Mammary epithelial cell (primary cell): ENCODE measurements at regions of chr16 and their contacts with region 1.

Region 1: GRCh38 chr16:70653809-70654771 is 7.7 kb downstream of the IL34 start:
- DNase-seq: peak; percentile 79
- H3K4me3 ChIP-seq: no peak overlapping the region
- H3K27ac ChIP-seq: no peak overlapping the region
- H3K4me1 ChIP-seq: peaks cover 10% of the 10 kb centered on the region
- H3K27me3 ChIP-seq: no peaks in the 10 kb centered on the region
- CTCF ChIP-seq: peak; percentile 79 to 84

Region 2: GRCh38 chr16:69406780-69407331 is 1247.2 kb before region 1 on chr16:
- CTCF ChIA-PET with region 1: interaction called, 13 read pairs
- dilution Hi-C with region 1: no loop called
- in situ Hi-C with region 1: no loop called
- intact Hi-C with region 1: no loop called
- DNase-seq: no peak
- H3K4me3 ChIP-seq: no peak overlapping the region
- H3K27ac ChIP-seq: no peak overlapping the region
- H3K4me1 ChIP-seq: peaks cover 61% of the 10 kb centered on the region
- H3K27me3 ChIP-seq: no peaks in the 10 kb centered on the region
- CTCF ChIP-seq: no peak

Region 3: GRCh38 chr16:70320121-70320520 is 334.0 kb before region 1 on chr16:
- CTCF ChIA-PET with region 1: no interaction called
- dilution Hi-C with region 1: no loop called
- in situ Hi-C with region 1: no loop called
- intact Hi-C with region 1: no loop called
- DNase-seq: no peak
- H3K4me3 ChIP-seq: no peak overlapping the region
- H3K27ac ChIP-seq: no peak overlapping the region
- H3K4me1 ChIP-seq: no peaks in the 10 kb centered on the region
- H3K27me3 ChIP-seq: no peaks in the 10 kb centered on the region
- CTCF ChIP-seq: no peak

Region 4: DNA sequence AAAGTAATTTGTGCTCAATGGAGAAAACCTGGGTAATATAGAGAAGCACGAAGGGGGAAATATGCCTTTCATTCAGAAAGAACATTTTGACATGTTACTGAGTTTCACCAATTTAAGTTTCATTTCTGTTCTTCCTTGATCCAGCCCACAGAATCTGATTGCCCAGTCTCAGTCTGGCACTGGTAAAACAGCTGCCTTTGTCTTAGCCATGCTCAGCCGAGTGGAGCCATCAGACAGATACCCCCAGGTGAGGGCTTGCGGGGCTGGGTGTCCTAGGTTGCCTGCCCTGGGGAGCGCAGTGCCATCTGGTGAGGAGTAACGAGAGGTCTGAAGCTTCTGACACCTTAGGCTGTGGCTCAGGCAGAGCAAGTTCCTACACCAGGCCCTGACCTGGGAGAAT is 289.7 kb before region 1 on chr16:
- CTCF ChIA-PET with region 1: interaction called, 4 read pairs
- dilution Hi-C with region 1: no loop called
- in situ Hi-C with region 1: loop called in 1 of 2 experiments (anchors 10 kb)
- intact Hi-C with region 1: no loop called
- DNase-seq: no peak
- H3K4me3 ChIP-seq: no peak overlapping the region
- H3K27ac ChIP-seq: no peak overlapping the region
- H3K4me1 ChIP-seq: no peaks in the 10 kb centered on the region
- H3K27me3 ChIP-seq: no peaks in the 10 kb centered on the region
- CTCF ChIP-seq: no peak

Region 5: DNA sequence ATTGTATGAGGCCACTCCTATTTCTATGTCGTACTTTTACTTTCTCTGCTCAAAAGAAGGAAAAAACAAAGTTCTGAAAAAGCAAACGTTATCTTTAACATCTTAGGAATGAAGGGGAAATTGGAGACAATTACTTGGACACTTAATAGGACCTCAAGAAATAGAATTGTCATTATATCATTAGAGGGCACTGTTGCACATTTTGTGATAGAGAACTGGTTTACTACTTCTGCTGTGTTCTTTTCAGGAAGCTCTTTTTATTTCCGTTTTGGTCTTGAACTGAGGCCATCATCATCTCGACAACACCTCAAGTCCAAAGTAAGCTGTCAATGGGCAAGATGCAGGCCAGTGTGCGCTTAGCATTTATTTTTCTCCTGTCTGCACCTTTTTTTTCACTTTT is 145.3 kb before region 1 on chr16:
- CTCF ChIA-PET with region 1: no interaction called
- dilution Hi-C with region 1: no loop called
- in situ Hi-C with region 1: no loop called
- intact Hi-C with region 1: loop called (anchors 1 kb)
- DNase-seq: no peak
- H3K4me3 ChIP-seq: no peak overlapping the region
- H3K27ac ChIP-seq: no peak overlapping the region
- H3K4me1 ChIP-seq: peaks cover 4% of the 10 kb centered on the region
- H3K27me3 ChIP-seq: no peaks in the 10 kb centered on the region
- CTCF ChIP-seq: peak in 1 of 2 donors; percentile 29

Region 6: GRCh38 chr16:70576431-70577255 is 77.4 kb before region 1 on chr16:
- CTCF ChIA-PET with region 1: no interaction called
- dilution Hi-C with region 1: loop called (anchors 5 kb)
- in situ Hi-C with region 1: no loop called
- intact Hi-C with region 1: loop called (anchors 1 kb)
- DNase-seq: peak; percentile 86
- H3K4me3 ChIP-seq: no peak overlapping the region
- H3K27ac ChIP-seq: peak overlapping the region; percentile 37
- H3K4me1 ChIP-seq: peaks cover 68% of the 10 kb centered on the region
- H3K27me3 ChIP-seq: no peaks in the 10 kb centered on the region
- CTCF ChIP-seq: no peak

Region 7: DNA sequence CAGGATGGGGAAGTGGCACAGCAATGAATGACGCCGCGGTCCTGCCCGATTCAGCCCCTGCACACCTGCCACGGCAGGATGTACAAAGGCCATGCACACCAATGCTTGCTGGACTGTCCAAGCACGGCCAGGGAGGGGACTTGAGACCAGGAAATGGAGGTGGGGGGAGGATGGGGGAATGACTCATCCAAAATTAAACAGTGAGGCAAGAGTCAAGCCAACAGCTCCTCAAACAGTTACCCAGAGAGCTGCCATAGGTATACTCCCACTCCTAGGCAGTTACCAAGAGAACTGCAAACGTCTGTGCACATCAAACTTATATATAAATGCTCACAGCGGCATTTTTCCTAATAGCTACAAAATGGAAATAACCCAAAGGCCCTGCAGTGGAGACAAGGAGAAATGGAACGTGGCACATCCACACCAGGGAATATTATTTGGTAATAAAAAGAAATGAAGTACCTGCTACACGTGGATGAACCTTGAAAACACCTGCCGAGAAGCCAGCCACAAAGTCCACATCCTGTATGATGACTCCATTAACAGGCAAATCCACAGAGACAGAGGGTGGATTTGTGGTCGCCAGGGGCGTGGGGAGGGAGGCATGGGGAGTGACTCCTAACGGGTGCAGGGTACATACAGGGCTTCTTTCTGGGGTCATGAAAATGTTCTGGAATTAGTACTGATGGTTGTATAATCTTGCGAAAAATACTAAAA is 92.8 kb after region 1 on chr16:
- CTCF ChIA-PET with region 1: no interaction called
- dilution Hi-C with region 1: no loop called
- in situ Hi-C with region 1: no loop called
- intact Hi-C with region 1: no loop called
- DNase-seq: peak; percentile 78
- H3K4me3 ChIP-seq: no peak overlapping the region
- H3K27ac ChIP-seq: peak overlapping the region; percentile 34
- H3K4me1 ChIP-seq: peaks cover 32% of the 10 kb centered on the region
- H3K27me3 ChIP-seq: no peaks in the 10 kb centered on the region
- CTCF ChIP-seq: no peak